CD14-positive monocyte (primary cell): ENCODE measurements at regions of chrX and their contacts with region 1.

Region 1: DNA sequence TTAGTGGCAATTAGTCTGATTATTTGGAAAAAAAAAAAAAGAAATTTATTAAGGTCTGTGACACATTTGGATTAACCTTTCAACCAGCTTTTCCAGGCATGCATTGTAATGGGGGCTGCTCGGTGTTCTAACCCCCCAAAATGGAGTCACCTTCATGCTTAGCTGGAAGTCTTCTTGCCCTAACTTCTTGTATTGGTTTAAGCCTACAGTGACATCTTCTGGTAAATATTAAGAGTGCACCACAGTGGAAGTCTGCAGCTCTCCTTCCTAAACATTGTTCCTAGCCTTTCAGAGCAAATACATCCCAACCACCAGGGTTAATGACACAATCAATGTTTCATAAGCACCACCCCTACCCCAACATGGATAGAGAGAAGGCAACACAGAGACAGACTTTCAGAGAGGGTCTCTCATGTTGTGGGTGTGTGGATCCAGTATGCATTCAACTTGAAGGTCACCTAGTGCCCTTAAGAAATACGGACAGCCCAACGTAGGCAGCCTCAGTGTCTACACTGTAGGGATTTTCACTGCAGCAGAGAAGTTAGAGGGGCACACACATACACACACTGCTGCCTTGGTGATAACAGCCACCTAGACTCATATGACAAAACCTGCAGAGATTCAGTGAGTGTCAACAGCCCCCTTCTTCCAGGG is 142.9 kb upstream of the MBNL3 start:
- DNase-seq: peak in 2 of 3 donors; percentile 2 to 13
- H3K4me3 ChIP-seq: no peak overlapping the region
- H3K4me3 Mint-ChIP-seq: no peak overlapping the region
- H3K27ac ChIP-seq: no peak overlapping the region
- H3K27ac Mint-ChIP-seq: no peak overlapping the region
- H3K4me1 ChIP-seq: no peaks in the 10 kb centered on the region
- H3K4me1 Mint-ChIP-seq: no peaks in the 10 kb centered on the region
- H3K27me3 ChIP-seq: peaks cover 0 to 6% of the 10 kb centered on the region in 2 donors
- H3K27me3 Mint-ChIP-seq: peaks cover 0 to 3% (median 0%) of the 10 kb centered on the region in 3 donors
- CTCF ChIP-seq: peak; percentile 39

Region 2: DNA sequence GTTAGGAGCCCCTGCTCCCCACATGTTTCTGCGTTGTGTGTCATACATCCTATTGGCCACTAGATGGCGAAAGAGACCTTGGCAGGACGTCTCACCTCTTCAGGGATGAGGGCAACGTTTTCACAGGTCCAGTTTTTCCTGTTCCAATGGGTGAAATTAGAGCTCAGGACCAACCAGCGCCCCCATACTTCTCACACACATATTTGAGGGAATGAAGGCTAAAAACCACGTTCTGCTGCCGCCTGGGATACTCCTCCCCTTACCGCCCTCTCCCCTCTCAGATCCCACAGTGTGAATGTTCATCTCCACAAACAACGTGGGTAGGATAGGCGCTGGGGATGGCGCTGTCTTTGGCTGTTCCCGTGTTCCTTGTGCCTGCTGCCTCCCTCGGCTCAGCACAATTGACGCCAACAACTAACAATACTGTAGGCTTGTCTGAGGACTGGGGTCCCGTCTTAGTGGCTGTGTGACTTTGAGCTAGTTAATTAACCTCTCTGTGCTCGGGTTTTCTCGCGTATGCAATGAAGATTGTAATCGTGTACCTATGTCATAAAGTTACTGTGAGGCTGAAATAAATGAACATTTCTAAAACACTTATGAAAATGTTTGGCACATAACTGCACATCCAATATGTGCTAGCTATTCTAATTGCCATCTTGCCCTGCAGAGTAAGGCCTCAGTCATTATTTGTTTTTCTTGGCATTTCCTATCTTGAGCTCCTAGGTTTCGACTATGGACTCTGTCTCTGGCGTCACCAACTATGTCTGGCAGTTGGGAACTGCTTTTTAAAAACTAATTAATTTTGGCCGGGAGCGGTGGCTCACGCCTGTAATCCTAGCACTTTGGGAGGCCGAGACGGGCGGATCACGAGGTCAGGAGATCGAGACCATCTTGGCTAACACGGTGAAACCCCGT is 790.0 kb before region 1 on chrX:
- intact Hi-C with region 1: loop called (anchors 10 kb)
- DNase-seq: peak; percentile 39 to 52 (median 47)
- H3K4me3 ChIP-seq: no peak overlapping the region
- H3K4me3 Mint-ChIP-seq: no peak overlapping the region
- H3K27ac ChIP-seq: no peak overlapping the region
- H3K27ac Mint-ChIP-seq: no peak overlapping the region
- H3K4me1 ChIP-seq: peaks cover 0 to 7% of the 10 kb centered on the region in 2 donors
- H3K4me1 Mint-ChIP-seq: peaks cover 7% of the 10 kb centered on the region
- H3K27me3 ChIP-seq: peaks cover 0 to 39% of the 10 kb centered on the region in 2 donors
- H3K27me3 Mint-ChIP-seq: peaks cover 0 to 50% (median 0%) of the 10 kb centered on the region in 3 donors
- CTCF ChIP-seq: peak; percentile 68

Region 3: DNA sequence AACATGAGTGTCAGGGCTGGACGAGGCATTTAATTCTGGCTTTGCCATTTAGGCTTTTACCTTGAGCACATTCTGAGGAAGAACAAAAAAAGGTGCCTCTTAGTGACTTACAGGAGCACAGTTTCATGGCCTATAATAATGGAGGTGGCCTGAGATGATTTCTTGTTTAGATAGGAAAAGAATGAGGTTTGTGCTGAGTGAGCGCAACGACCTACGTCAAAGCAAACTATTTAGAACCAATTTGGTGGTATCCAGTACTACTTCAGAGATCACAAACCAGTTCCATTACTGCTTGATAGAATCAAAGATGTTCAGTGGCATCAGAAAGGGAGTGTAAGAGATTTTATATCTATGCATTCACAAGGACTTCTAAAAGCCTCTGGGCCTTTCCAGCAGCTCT is 48.4 kb before region 1 on chrX:
- intact Hi-C with region 1: no loop called
- DNase-seq: no peak
- H3K4me3 ChIP-seq: no peak overlapping the region
- H3K4me3 Mint-ChIP-seq: no peak overlapping the region
- H3K27ac ChIP-seq: no peak overlapping the region
- H3K27ac Mint-ChIP-seq: peak overlapping the region in 1 of 7 donors; percentile 44
- H3K4me1 ChIP-seq: no peaks in the 10 kb centered on the region
- H3K4me1 Mint-ChIP-seq: no peaks in the 10 kb centered on the region
- H3K27me3 ChIP-seq: peaks cover 0 to 11% of the 10 kb centered on the region in 2 donors
- H3K27me3 Mint-ChIP-seq: peaks cover 0 to 2% (median 2%) of the 10 kb centered on the region in 3 donors
- CTCF ChIP-seq: no peak

Region 4: DNA sequence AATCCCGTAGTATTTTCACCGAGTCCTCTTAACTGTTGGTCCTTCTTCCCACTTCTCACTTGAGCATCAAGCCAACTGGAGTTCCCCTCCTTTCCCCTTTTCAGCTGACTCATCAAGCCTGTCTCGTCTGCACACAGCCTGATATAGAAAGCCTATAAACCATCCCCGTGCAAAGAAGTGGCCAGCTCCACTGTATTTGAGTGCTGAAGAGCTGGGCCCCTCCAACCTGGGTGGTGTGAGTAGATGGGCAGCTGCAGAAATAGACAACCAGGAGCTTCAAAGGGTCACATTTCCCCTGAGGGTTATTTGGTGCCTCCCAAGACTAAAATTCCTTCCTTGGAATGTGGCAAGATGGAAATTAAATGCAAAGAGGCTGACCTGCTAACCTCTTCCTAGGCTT is 127.1 kb after region 1 on chrX:
- intact Hi-C with region 1: no loop called
- DNase-seq: peak in 1 of 3 donors; percentile 8
- H3K4me3 ChIP-seq: no peak overlapping the region
- H3K4me3 Mint-ChIP-seq: no peak overlapping the region
- H3K27ac ChIP-seq: no peak overlapping the region
- H3K27ac Mint-ChIP-seq: no peak overlapping the region
- H3K4me1 ChIP-seq: no peaks in the 10 kb centered on the region
- H3K4me1 Mint-ChIP-seq: no peaks in the 10 kb centered on the region
- H3K27me3 ChIP-seq: no peaks in the 10 kb centered on the region
- H3K27me3 Mint-ChIP-seq: peaks cover 0 to 14% (median 0%) of the 10 kb centered on the region in 3 donors
- CTCF ChIP-seq: no peak